GM12878 (cell line): ENCODE measurements at regions of chr9 and their contacts with region 1.

Region 1: DNA sequence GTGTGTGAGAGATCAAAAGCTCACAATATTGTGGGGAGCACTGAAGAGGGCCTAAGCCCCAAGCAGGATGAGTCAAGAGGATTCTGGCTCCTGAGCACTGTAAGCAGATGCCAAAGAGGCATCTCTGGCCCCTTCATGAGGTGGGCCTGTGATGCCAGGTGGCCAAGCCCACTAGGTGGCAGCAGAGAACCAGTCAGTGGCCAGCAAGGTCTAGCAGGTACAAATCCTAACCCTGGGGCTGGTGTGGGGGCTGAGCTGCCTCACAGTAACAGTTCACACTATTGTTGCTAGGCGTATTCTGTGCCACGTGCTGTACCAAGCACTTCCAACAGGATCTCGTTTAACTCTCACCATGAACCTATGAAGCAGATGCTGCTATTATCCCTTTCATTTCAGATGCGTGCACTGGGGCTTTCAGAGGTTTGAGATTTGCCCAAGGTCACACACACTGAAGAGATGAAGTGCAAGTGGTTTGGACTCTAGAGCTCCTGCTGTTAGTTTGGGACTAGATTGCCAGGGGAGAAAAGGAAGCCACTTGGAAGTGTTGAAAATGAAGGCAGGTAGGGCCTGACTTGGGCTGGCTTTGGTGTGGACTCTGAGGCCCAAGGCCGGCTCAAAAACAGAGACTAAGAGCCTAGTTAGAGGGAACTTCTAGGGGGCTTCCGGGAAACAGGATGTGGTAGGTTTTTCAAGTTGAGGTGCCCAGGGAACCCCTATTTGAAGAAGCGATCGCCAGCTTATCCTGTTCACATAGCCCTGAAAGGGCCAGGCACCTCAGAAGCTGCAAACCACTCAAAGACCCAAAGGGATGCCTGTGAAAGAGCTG is 4.4 kb upstream of the MLANA start:
- DNase-seq: peak; percentile 40
- ATAC-seq: peak; percentile 100
- H3K4me3 ChIP-seq: no peak overlapping the region
- H3K27ac ChIP-seq: no peak overlapping the region
- H3K4me1 ChIP-seq: no peaks in the 10 kb centered on the region
- H3K27me3 ChIP-seq: no peaks in the 10 kb centered on the region
- CTCF ChIP-seq: peak; percentile 95 to 96 (median 95); a peak in 5 of 6 replicates
- EP300 ChIP-seq: no peak
- POLR2A ChIP-seq: no peak
- RAD21 ChIP-seq: peak; percentile 98

Region 2: GRCh38 chr9:5832543-5833529 is 53.5 kb before region 1 on chr9 and contains the start of gene ERMP1:
- CTCF ChIA-PET with region 1: interaction called, 37 read pairs
- POLR2A ChIA-PET with region 1: no interaction called
- RAD21 ChIA-PET with region 1: interaction called, 12 read pairs
- SMC1A ChIA-PET with region 1: interaction called, 14 read pairs
- in situ Hi-C with region 1: no loop called
- intact Hi-C with region 1: no loop called
- DNase-seq: no peak
- ATAC-seq: peak; percentile 85
- H3K4me3 ChIP-seq: peak within 1 kb of the TSS; percentile 97
- H3K27ac ChIP-seq: peak within 1 kb of the TSS; percentile 70
- H3K4me1 ChIP-seq: peaks cover 5% of the 10 kb centered on the region; the same call in 1 of the 2 replicates
- H3K27me3 ChIP-seq: no peaks in the 10 kb centered on the region
- CTCF ChIP-seq: peak; percentile 85 to 97 (median 89); a peak in 5 of 6 replicates
- EP300 ChIP-seq: no peak
- POLR2A ChIP-seq: peak; percentile 91
- RAD21 ChIP-seq: peak; percentile 62
- polyA plus RNA-seq, gene ERMP1: 2.4 to 2.7 TPM

Region 3: GRCh38 chr9:5899292-5899691 is 13.0 kb after region 1 on chr9:
- CTCF ChIA-PET with region 1: interaction called, 62 read pairs
- POLR2A ChIA-PET with region 1: no interaction called
- RAD21 ChIA-PET with region 1: interaction called, 9 read pairs
- SMC1A ChIA-PET with region 1: interaction called, 40 read pairs
- in situ Hi-C with region 1: no loop called
- intact Hi-C with region 1: no loop called
- DNase-seq: no peak
- ATAC-seq: peak; percentile 42; the same call in 1 of the 3 replicates
- H3K4me3 ChIP-seq: no peak overlapping the region
- H3K27ac ChIP-seq: no peak overlapping the region
- H3K4me1 ChIP-seq: no peaks in the 10 kb centered on the region
- H3K27me3 ChIP-seq: no peaks in the 10 kb centered on the region
- CTCF ChIP-seq: peak; percentile 32 to 36 (median 35); a peak in 3 of 6 replicates
- EP300 ChIP-seq: no peak
- POLR2A ChIP-seq: no peak
- RAD21 ChIP-seq: peak; percentile 46

Region 4: DNA sequence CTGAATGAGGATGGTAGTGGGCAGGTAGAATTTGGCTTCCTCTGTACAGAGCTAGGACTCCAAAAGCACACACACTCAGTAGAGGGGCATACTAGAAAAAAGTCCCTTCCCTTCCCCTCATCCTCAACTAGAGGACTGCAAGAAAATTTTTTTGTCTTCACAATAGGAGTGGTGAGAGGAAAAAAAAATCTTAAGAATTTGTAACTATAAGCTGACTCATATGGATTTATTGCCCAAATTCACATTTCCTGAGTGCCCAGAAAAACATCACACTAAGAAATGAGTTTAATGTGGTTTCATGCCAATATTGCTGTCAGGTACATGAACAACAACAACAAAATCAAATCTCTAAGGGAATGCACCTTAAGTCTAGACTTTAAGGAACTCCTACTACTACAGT is 85.4 kb after region 1 on chr9:
- CTCF ChIA-PET with region 1: interaction called, 117 read pairs
- POLR2A ChIA-PET with region 1: no interaction called
- RAD21 ChIA-PET with region 1: interaction called, 79 read pairs
- SMC1A ChIA-PET with region 1: interaction called, 119 read pairs
- in situ Hi-C with region 1: no loop called
- intact Hi-C with region 1: loop called (anchors 1 kb)
- DNase-seq: no peak
- ATAC-seq: no peak
- H3K4me3 ChIP-seq: no peak overlapping the region
- H3K27ac ChIP-seq: no peak overlapping the region
- H3K4me1 ChIP-seq: no peaks in the 10 kb centered on the region
- H3K27me3 ChIP-seq: no peaks in the 10 kb centered on the region
- CTCF ChIP-seq: no peak
- EP300 ChIP-seq: no peak
- POLR2A ChIP-seq: no peak
- RAD21 ChIP-seq: no peak

Region 5: GRCh38 chr9:6008169-6008979 is 122.0 kb after region 1 on chr9:
- CTCF ChIA-PET with region 1: interaction called, 20 read pairs
- POLR2A ChIA-PET with region 1: no interaction called
- RAD21 ChIA-PET with region 1: interaction called, 19 read pairs
- SMC1A ChIA-PET with region 1: interaction called, 13 read pairs
- in situ Hi-C with region 1: no loop called
- intact Hi-C with region 1: no loop called
- DNase-seq: peak; percentile 88
- ATAC-seq: peak; percentile 74
- H3K4me3 ChIP-seq: peak overlapping the region; percentile 82
- H3K27ac ChIP-seq: peak overlapping the region; percentile 66
- H3K4me1 ChIP-seq: peaks cover 12% of the 10 kb centered on the region
- H3K27me3 ChIP-seq: no peaks in the 10 kb centered on the region
- CTCF ChIP-seq: no peak
- EP300 ChIP-seq: no peak
- POLR2A ChIP-seq: peak; percentile 55
- RAD21 ChIP-seq: no peak

Region 6: DNA sequence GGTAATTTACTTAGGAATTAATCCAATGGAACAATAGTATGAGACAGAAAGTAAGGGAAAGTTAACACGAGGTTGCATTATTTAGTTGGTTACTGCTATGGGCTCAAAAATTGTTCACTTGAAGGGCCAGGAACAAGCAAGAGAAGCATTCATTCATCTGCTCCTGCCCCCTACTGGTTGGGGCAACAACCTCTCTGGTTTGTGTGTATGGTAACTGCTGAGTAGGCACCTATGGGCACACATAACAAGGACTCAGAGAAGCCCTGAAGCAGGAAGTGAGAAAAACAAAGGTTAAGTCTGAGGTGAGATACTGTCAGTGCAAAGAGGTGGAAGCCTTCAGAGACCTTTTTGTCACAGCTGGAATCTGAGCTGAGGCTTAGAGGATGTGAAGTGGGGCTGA is 163.5 kb after region 1 on chr9:
- CTCF ChIA-PET with region 1: interaction called, 288 read pairs
- POLR2A ChIA-PET with region 1: interaction called, 6 read pairs
- RAD21 ChIA-PET with region 1: interaction called, 121 read pairs
- SMC1A ChIA-PET with region 1: interaction called, 174 read pairs
- in situ Hi-C with region 1: loop called (anchors 5 kb)
- intact Hi-C with region 1: loop called (anchors 1 kb)
- DNase-seq: peak; percentile 48
- ATAC-seq: peak; percentile 84
- H3K4me3 ChIP-seq: no peak overlapping the region
- H3K27ac ChIP-seq: no peak overlapping the region
- H3K4me1 ChIP-seq: peaks cover 24% of the 10 kb centered on the region
- H3K27me3 ChIP-seq: no peaks in the 10 kb centered on the region
- CTCF ChIP-seq: peak; percentile 26 to 66 (median 57)
- EP300 ChIP-seq: no peak
- POLR2A ChIP-seq: no peak
- RAD21 ChIP-seq: peak; percentile 35; the same call in 1 of the 2 replicates